PC-9 (cell line): ENCODE measurements at regions of chr7 and their contacts with region 1.

Region 1: GRCh38 chr7:150941981-150942590 is 36.0 kb downstream of the KCNH2 start:
- DNase-seq: peak in 1 of 2 experiments; percentile 74
- H3K4me3 ChIP-seq: no peak overlapping the region
- H3K27ac ChIP-seq: no peak overlapping the region
- H3K4me1 ChIP-seq: no peaks in the 10 kb centered on the region
- H3K27me3 ChIP-seq: peaks cover 81% of the 10 kb centered on the region
- CTCF ChIP-seq: no peak

Region 2: GRCh38 chr7:150903606-150904005 is 38.5 kb before region 1 on chr7:
- CTCF ChIA-PET with region 1: interaction called, 6 read pairs
- POLR2A ChIA-PET with region 1: interaction called, 5 read pairs
- intact Hi-C with region 1: loop called (anchors 5 kb)
- DNase-seq: peak; percentile 64 to 93
- H3K4me3 ChIP-seq: no peak overlapping the region
- H3K27ac ChIP-seq: no peak overlapping the region
- H3K4me1 ChIP-seq: no peaks in the 10 kb centered on the region
- H3K27me3 ChIP-seq: peaks cover 52% of the 10 kb centered on the region
- CTCF ChIP-seq: no peak

Region 3: GRCh38 chr7:150962553-150963399 is 20.7 kb after region 1 on chr7:
- CTCF ChIA-PET with region 1: no interaction called
- POLR2A ChIA-PET with region 1: no interaction called
- intact Hi-C with region 1: no loop called
- DNase-seq: peak in 1 of 2 experiments; percentile 61
- H3K4me3 ChIP-seq: no peak overlapping the region
- H3K27ac ChIP-seq: no peak overlapping the region
- H3K4me1 ChIP-seq: no peaks in the 10 kb centered on the region
- H3K27me3 ChIP-seq: peaks cover 45% of the 10 kb centered on the region
- CTCF ChIP-seq: peak; percentile 97

Region 4: GRCh38 chr7:151010307-151011096 is 68.4 kb after region 1 on chr7:
- CTCF ChIA-PET with region 1: interaction called, 11 read pairs
- POLR2A ChIA-PET with region 1: interaction called, 4 read pairs
- intact Hi-C with region 1: no loop called
- DNase-seq: peak in 1 of 2 experiments; percentile 27
- H3K4me3 ChIP-seq: no peak overlapping the region
- H3K27ac ChIP-seq: no peak overlapping the region
- H3K4me1 ChIP-seq: peaks cover 26% of the 10 kb centered on the region
- H3K27me3 ChIP-seq: no peaks in the 10 kb centered on the region
- CTCF ChIP-seq: no peak